PC-9 (cell line): ENCODE measurements at regions of chr3 and their contacts with region 1.

Region 1: GRCh38 chr3:46947981-46948791 is 28.4 kb downstream of the CCDC12 start:
- DNase-seq: peak; percentile 89 to 95
- H3K4me3 ChIP-seq: no peak overlapping the region; the same call in 1 of the 2 replicates
- H3K27ac ChIP-seq: peak overlapping the region; percentile 87
- H3K4me1 ChIP-seq: peaks cover 71% of the 10 kb centered on the region
- H3K27me3 ChIP-seq: no peaks in the 10 kb centered on the region
- CTCF ChIP-seq: no peak

Region 2: GRCh38 chr3:46935168-46935858 is 12.9 kb before region 1 on chr3:
- CTCF ChIA-PET with region 1: interaction called, 12 read pairs
- POLR2A ChIA-PET with region 1: interaction called, 9 read pairs
- intact Hi-C with region 1: loop called (anchors 1 kb)
- DNase-seq: peak; percentile 86 to 90
- H3K4me3 ChIP-seq: no peak overlapping the region
- H3K27ac ChIP-seq: peak overlapping the region; percentile 53
- H3K4me1 ChIP-seq: peaks cover 63% of the 10 kb centered on the region
- H3K27me3 ChIP-seq: no peaks in the 10 kb centered on the region
- CTCF ChIP-seq: peak; percentile 65

Region 3: DNA sequence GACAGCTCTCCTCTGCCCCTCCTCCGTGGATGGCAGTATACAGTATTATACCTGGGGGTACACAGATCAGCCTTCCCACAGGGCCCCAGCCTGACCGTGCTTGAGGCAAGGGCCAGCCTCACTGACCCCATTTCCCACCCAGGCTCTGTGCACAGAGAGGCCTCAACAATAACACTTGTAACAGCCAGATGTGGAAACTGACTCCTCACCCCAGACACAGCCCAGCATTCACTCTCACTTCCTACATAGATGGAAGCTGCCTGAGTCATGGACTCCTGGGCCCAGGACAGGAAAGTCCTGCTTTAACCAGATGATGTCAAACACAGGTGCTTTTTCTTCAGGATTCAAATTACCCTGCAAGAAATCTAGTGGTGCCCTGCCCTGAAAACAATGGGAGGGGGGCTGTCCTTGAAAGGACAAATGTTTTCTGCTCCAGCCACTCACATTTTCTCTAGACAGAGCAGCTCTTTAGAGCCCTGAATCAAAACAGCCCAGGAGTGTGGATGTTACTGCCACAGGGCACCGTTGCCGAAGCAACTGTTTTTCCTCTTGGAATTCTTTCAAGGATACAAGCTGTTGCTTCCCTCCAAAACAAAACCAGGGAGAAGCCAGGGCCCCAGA is 12.0 kb after region 1 on chr3:
- CTCF ChIA-PET with region 1: no interaction called
- POLR2A ChIA-PET with region 1: no interaction called
- intact Hi-C with region 1: loop called (anchors 1 kb)
- DNase-seq: peak; percentile 67 to 85
- H3K4me3 ChIP-seq: no peak overlapping the region
- H3K27ac ChIP-seq: peak overlapping the region; percentile 64
- H3K4me1 ChIP-seq: peaks cover 37% of the 10 kb centered on the region
- H3K27me3 ChIP-seq: no peaks in the 10 kb centered on the region
- CTCF ChIP-seq: no peak

Region 4: GRCh38 chr3:46998121-46998851 is 50.1 kb after region 1 on chr3:
- CTCF ChIA-PET with region 1: interaction called, 16 read pairs
- POLR2A ChIA-PET with region 1: no interaction called
- intact Hi-C with region 1: no loop called
- DNase-seq: peak; percentile 44 to 75
- H3K4me3 ChIP-seq: no peak overlapping the region
- H3K27ac ChIP-seq: no peak overlapping the region
- H3K4me1 ChIP-seq: no peaks in the 10 kb centered on the region
- H3K27me3 ChIP-seq: no peaks in the 10 kb centered on the region
- CTCF ChIP-seq: peak; percentile 79

Region 5: DNA sequence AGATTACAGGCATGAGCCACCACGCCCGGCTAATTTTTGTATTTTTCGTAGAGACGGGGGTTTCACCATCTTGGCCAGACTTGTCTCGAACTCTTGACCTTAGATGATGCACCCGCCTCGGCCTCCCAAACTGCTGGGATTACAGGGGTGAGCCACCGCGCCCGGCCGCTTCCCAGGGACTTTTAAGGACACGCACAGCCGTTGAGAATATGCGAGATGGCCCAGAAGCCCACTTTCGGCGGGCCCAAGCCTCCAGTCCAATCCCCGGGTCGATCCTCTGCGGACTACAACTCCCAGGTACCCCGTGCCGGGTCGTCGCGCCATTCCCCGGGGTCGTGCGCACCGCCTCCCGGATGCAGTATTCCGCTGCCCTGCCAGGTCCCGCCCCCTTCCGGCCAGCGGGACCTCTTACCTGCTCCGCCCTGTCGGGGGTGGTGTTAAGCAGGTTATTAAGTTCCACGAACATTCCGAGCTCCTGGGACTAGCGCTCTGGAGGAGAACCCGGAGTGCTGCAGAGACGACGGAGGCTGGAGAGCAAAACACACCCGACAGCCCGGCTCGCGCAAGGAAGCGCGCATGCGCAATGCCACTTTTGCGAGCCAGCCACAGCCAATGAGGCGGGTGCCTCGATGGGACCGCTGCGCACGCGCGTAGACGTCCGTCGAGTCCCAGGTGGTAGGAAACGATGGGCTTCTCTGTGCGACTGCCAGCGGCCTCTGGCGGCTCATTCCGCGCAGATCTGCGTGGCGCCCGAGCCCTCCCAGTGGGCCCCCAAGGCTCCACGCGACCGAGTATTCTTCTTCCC is 565.1 kb after region 1 on chr3 and contains the start of gene ELP6:
- CTCF ChIA-PET with region 1: no interaction called
- POLR2A ChIA-PET with region 1: no interaction called
- intact Hi-C with region 1: loop called (anchors 10 kb)
- DNase-seq: peak; percentile 83 to 96
- H3K4me3 ChIP-seq: peak within 1 kb of the TSS; percentile 68
- H3K27ac ChIP-seq: peak within 1 kb of the TSS; percentile 55
- H3K4me1 ChIP-seq: peaks cover 5% of the 10 kb centered on the region; the same call in 1 of the 2 replicates
- H3K27me3 ChIP-seq: no peaks in the 10 kb centered on the region
- CTCF ChIP-seq: peak; percentile 55
- total RNA-seq, gene ELP6: 38.8 and 39.6 TPM in 2 replicates